CD4-positive, alpha-beta memory T cell (primary cell): ENCODE measurements at regions of chr16 and their contacts with region 1.

Region 1: GRCh38 chr16:48623304-48624016 is 13.5 kb upstream of the N4BP1 start:
- DNase-seq: peak; percentile 71 to 84 (median 78)
- H3K4me3 ChIP-seq: peak overlapping the region; percentile 22 to 53
- H3K4me3 Mint-ChIP-seq: peak overlapping the region; percentile 64 to 89 (median 80)
- H3K27ac ChIP-seq: peak overlapping the region; percentile 26
- H3K27ac Mint-ChIP-seq: peak overlapping the region in 5 of 7 donors; percentile 15 to 86 (median 54)
- H3K4me1 ChIP-seq: peaks cover 10% of the 10 kb centered on the region
- H3K4me1 Mint-ChIP-seq: peaks cover 5 to 19% (median 10%) of the 10 kb centered on the region in 4 donors
- H3K27me3 ChIP-seq: no peaks in the 10 kb centered on the region
- H3K27me3 Mint-ChIP-seq: no peaks in the 10 kb centered on the region

Region 2: DNA sequence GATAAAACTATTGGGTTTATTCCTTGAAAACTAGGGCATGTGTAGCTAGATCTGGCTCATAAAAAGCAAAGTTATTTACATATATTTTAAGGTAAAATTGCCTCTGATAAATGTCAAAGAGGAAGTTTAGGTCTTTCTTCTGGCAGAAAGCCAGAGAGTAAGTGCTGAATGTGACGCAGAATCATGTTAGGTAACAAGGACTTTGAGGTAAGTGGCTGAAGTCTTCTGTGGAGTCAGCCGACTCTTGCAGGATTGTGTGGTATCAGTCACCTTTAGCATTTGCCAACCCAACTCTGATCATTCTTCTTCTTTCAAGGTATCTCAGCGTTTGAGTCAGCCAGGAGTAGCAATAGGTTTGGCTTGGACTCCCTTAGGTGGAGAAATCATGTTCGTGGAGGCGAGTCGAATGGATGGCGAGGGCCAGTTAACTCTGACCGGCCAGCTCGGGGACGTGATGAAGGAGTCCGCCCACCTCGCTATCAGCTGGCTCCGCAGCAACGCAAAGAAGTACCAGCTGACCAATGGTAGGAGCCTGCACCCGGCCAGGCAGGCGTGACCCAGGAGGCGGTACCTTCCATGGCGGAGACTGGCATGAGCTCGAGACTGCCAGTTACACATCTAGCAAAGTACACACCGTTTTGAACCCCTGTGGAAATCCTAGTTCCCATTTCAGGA is 276.1 kb before region 1 on chr16:
- CTCF ChIA-PET with region 1: interaction called, 185 read pairs
- POLR2A ChIA-PET with region 1: no interaction called
- intact Hi-C with region 1: no loop called
- DNase-seq: peak in 2 of 5 donors; percentile 4 to 8
- H3K4me3 ChIP-seq: no peak overlapping the region
- H3K4me3 Mint-ChIP-seq: no peak overlapping the region
- H3K27ac ChIP-seq: no peak overlapping the region
- H3K27ac Mint-ChIP-seq: peak overlapping the region in 2 of 7 donors; percentile 7 to 41
- H3K4me1 ChIP-seq: no peaks in the 10 kb centered on the region
- H3K4me1 Mint-ChIP-seq: peaks cover 0 to 1% (median 0%) of the 10 kb centered on the region in 4 donors
- H3K27me3 ChIP-seq: no peaks in the 10 kb centered on the region
- H3K27me3 Mint-ChIP-seq: no peaks in the 10 kb centered on the region

Region 3: DNA sequence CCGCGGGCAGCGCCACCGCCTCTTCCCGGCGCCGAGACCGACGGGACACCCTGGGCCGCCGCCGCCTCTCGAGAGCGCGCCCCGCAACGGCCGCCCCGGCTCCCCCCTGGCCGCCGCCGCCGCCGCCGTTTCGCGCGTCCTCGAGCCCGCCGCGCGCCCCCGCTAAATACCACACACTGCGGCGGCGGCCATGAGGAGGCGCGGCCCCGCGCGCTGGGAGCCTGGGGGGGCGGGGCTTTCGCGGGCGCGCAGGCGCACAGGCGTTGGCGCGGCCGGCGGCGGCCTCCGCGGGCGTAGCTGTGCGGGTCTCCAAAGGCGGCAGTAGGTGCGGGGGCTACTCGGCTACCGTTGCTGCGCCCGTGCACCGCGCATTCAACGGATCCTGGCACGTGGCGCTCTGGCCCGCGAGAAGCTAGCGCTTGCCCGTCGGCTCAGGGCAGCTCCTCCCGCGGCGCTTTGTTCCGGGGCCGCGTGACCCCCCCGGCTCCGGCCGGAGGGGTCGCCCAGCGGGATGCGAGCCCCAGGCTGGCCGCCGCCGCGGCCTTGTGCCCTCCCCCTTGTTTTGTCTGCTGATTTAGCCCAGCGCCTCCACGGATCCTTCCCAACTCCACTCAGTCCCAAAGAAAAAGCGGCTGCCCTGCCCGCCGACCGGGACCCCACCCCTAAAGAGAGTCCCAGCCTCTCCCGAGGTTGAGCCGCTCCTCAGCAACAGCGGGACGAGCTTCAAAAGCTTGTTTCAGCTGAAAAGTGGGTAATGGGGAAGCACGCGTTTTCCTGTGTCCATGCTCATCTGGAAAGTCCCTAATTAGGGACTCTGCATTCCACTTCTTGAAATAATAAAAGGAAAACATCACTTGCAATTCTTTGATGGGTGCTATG is 237.9 kb before region 1 on chr16 and contains the start of gene SIAH1:
- CTCF ChIA-PET with region 1: interaction called, 15 read pairs
- POLR2A ChIA-PET with region 1: interaction called, 3 read pairs
- intact Hi-C with region 1: loop called (anchors 1 kb)
- DNase-seq: peak; percentile 76 to 91 (median 88)
- H3K4me3 ChIP-seq: peak within 1 kb of the TSS; percentile 63 to 81
- H3K4me3 Mint-ChIP-seq: peak within 1 kb of the TSS; percentile 89 to 97 (median 94)
- H3K27ac ChIP-seq: peak within 1 kb of the TSS; percentile 65
- H3K27ac Mint-ChIP-seq: peak within 1 kb of the TSS; percentile 90 to 97 (median 94)
- H3K4me1 ChIP-seq: peaks cover 29% of the 10 kb centered on the region
- H3K4me1 Mint-ChIP-seq: peaks cover 17 to 29% (median 20%) of the 10 kb centered on the region in 4 donors
- H3K27me3 ChIP-seq: no peaks in the 10 kb centered on the region
- H3K27me3 Mint-ChIP-seq: no peaks in the 10 kb centered on the region
- total RNA-seq, gene SIAH1: 11.9 to 14.9 TPM

Region 4: GRCh38 chr16:48535831-48536613 is 87.4 kb before region 1 on chr16:
- CTCF ChIA-PET with region 1: interaction called, 98 read pairs
- POLR2A ChIA-PET with region 1: interaction called, 9 read pairs
- intact Hi-C with region 1: loop called (anchors 1 kb)
- DNase-seq: no peak
- H3K4me3 ChIP-seq: no peak overlapping the region
- H3K4me3 Mint-ChIP-seq: no peak overlapping the region
- H3K27ac ChIP-seq: no peak overlapping the region
- H3K27ac Mint-ChIP-seq: peak overlapping the region in 3 of 7 donors; percentile 18 to 65 (median 55)
- H3K4me1 ChIP-seq: peaks cover 9% of the 10 kb centered on the region
- H3K4me1 Mint-ChIP-seq: peaks cover 5 to 29% (median 12%) of the 10 kb centered on the region in 4 donors
- H3K27me3 ChIP-seq: no peaks in the 10 kb centered on the region
- H3K27me3 Mint-ChIP-seq: no peaks in the 10 kb centered on the region

Region 5: DNA sequence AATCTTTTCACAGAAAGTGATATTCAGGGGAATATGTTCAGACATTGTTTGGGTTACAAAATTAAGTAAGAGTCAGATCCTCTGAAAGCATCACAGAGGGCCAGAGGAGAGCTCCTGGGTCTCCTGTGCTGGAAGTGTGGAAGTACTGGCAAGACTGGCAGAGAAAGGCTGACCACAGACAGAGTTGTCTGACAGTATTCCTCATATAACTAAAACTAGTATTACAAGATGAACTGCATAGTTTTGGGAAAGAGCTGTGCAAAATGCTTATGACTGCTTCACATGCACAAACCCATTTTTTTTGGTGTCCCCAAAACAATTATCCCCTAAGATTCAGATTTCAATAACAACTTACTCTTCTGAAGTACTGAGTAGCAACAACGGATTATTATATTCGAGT is 48.7 kb before region 1 on chr16:
- CTCF ChIA-PET with region 1: interaction called, 11 read pairs
- POLR2A ChIA-PET with region 1: interaction called, 3 read pairs
- intact Hi-C with region 1: no loop called
- DNase-seq: no peak
- H3K4me3 ChIP-seq: no peak overlapping the region
- H3K4me3 Mint-ChIP-seq: peak overlapping the region in 3 of 8 donors; percentile 15 to 26 (median 17)
- H3K27ac ChIP-seq: no peak overlapping the region
- H3K27ac Mint-ChIP-seq: peak overlapping the region in 3 of 7 donors; percentile 46 to 55 (median 55)
- H3K4me1 ChIP-seq: peaks cover 59% of the 10 kb centered on the region
- H3K4me1 Mint-ChIP-seq: peaks cover 58 to 91% (median 74%) of the 10 kb centered on the region in 4 donors
- H3K27me3 ChIP-seq: no peaks in the 10 kb centered on the region
- H3K27me3 Mint-ChIP-seq: no peaks in the 10 kb centered on the region

Region 6: GRCh38 chr16:48609652-48610029 is 13.8 kb before region 1 on chr16:
- CTCF ChIA-PET with region 1: interaction called, 124 read pairs
- POLR2A ChIA-PET with region 1: interaction called, 101 read pairs
- intact Hi-C with region 1: loop called (anchors 1 kb)
- DNase-seq: no peak
- H3K4me3 ChIP-seq: peak overlapping the region; percentile 55 to 82
- H3K4me3 Mint-ChIP-seq: peak overlapping the region in 1 of 8 donors; percentile 90
- H3K27ac ChIP-seq: peak overlapping the region; percentile 87
- H3K27ac Mint-ChIP-seq: peak overlapping the region; percentile 92 to 97 (median 95)
- H3K4me1 ChIP-seq: peaks cover 81% of the 10 kb centered on the region
- H3K4me1 Mint-ChIP-seq: peaks cover 35 to 52% (median 39%) of the 10 kb centered on the region in 4 donors
- H3K27me3 ChIP-seq: no peaks in the 10 kb centered on the region
- H3K27me3 Mint-ChIP-seq: no peaks in the 10 kb centered on the region

Region 7: GRCh38 chr16:48687421-48688038 is 64.1 kb after region 1 on chr16:
- CTCF ChIA-PET with region 1: no interaction called
- POLR2A ChIA-PET with region 1: no interaction called
- intact Hi-C with region 1: no loop called
- DNase-seq: peak in 3 of 5 donors; percentile 4 to 8 (median 5)
- H3K4me3 ChIP-seq: no peak overlapping the region
- H3K4me3 Mint-ChIP-seq: no peak overlapping the region
- H3K27ac ChIP-seq: no peak overlapping the region
- H3K27ac Mint-ChIP-seq: no peak overlapping the region
- H3K4me1 ChIP-seq: no peaks in the 10 kb centered on the region
- H3K4me1 Mint-ChIP-seq: peaks cover 0 to 3% (median under 1%) of the 10 kb centered on the region in 4 donors
- H3K27me3 ChIP-seq: no peaks in the 10 kb centered on the region
- H3K27me3 Mint-ChIP-seq: peaks cover 7 to 19% of the 10 kb centered on the region in 2 donors